IMR-90 (cell line): ENCODE measurements at regions of chr17 and their contacts with region 1.

Region 1: DNA sequence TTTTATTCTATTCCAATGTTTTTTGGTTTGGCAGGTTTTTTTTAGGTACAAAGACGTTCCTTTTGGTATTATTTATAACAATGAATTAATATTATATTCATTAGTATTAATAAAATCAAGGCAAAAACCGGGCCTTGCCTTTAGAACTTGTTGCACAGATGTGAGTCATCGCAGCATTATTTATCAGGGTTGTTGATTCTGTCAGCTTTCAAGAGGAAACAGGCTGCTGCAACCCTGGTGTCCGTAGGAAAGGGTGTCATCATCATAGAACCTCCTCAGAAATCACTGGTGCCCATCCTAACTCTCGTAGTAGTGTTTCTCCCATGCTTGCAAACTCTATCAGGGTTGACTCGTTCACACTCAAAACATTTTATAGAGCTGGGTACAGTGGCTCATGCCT is 10.2 kb upstream of the LRRC37B start:
- DNase-seq: no peak
- ATAC-seq: no peak
- H3K4me3 ChIP-seq: no peak overlapping the region
- H3K27ac ChIP-seq: no peak overlapping the region
- H3K4me1 ChIP-seq: no peaks in the 10 kb centered on the region
- H3K27me3 ChIP-seq: no peaks in the 10 kb centered on the region
- CTCF ChIP-seq: no peak
- POLR2A ChIP-seq: no peak
- RAD21 ChIP-seq: no peak

Region 2: GRCh38 chr17:31935512-31935911 is 61.5 kb before region 1 on chr17:
- CTCF ChIA-PET with region 1: no interaction called
- POLR2A ChIA-PET with region 1: no interaction called
- dilution Hi-C with region 1: no loop called
- in situ Hi-C with region 1: no loop called
- intact Hi-C with region 1: loop called (anchors 10 kb)
- DNase-seq: no peak
- ATAC-seq: no peak
- H3K4me3 ChIP-seq: no peak overlapping the region
- H3K27ac ChIP-seq: no peak overlapping the region
- H3K4me1 ChIP-seq: peaks cover 2% of the 10 kb centered on the region; the same call in 1 of the 2 replicates
- H3K27me3 ChIP-seq: no peaks in the 10 kb centered on the region
- CTCF ChIP-seq: no peak
- POLR2A ChIP-seq: no peak
- RAD21 ChIP-seq: no peak

Region 3: GRCh38 chr17:32103476-32104113 is 106.6 kb after region 1 on chr17:
- CTCF ChIA-PET with region 1: no interaction called
- POLR2A ChIA-PET with region 1: no interaction called
- dilution Hi-C with region 1: no loop called
- in situ Hi-C with region 1: no loop called
- intact Hi-C with region 1: no loop called
- DNase-seq: no peak
- ATAC-seq: no peak
- H3K4me3 ChIP-seq: no peak overlapping the region
- H3K27ac ChIP-seq: no peak overlapping the region
- H3K4me1 ChIP-seq: no peaks in the 10 kb centered on the region
- H3K27me3 ChIP-seq: peaks cover 4% of the 10 kb centered on the region
- CTCF ChIP-seq: no peak
- POLR2A ChIP-seq: no peak
- RAD21 ChIP-seq: no peak